HepG2 (cell line): ENCODE measurements at regions of chr13 and their contacts with region 1.

Region 1: DNA sequence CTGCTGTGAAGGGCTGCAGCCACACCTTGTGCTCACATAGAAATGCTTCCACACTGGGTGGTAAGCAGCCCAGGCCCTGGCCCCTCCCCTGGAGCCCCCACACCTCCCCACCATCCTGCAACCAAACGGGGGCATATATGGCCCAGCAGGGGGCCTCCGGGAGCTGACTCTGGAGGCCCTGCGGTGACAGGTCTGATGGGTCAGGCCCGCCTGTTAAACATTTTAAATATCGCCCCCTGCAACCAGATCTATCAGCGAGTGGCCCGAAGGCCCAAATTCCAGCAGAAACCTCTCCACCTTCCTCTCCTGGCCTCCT is 48.0 kb upstream of the KATNAL1 start:
- DNase-seq: peak; percentile 49
- ATAC-seq: peak; percentile 99
- H3K4me3 ChIP-seq: no peak overlapping the region; a peak in 1 of 6 replicates
- H3K27ac ChIP-seq: no peak overlapping the region
- H3K4me1 ChIP-seq: peaks cover 10% of the 10 kb centered on the region
- H3K27me3 ChIP-seq: peaks cover 0 to 2% of the 10 kb centered on the region in 2 experiments; a peak in 1 of 5 replicates
- CTCF ChIP-seq: peak; percentile 80
- EP300 ChIP-seq: no peak
- POLR2A ChIP-seq: no peak
- RAD21 ChIP-seq: peak; percentile 60

Region 2: DNA sequence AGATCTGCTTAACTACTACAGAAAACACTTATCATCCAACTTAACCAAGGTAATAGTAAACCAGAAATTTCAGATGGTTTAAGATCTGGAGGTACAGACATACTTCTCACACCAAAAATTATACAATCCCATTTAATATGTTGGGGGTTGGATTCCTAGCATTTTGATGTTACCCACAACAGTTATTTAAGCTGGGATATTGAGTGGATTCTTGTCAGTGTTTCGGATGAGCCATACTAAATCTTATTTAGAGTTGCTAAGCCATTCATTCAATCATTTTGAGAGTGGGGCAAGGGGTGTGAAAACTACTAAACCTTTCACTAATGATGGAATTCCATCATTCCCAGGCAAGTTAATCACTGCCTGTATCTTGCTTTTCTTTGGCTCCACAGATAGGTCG is 88.6 kb before region 1 on chr13:
- CTCF ChIA-PET with region 1: no interaction called
- POLR2A ChIA-PET with region 1: no interaction called
- in situ Hi-C with region 1: no loop called
- intact Hi-C with region 1: no loop called
- DNase-seq: no peak
- ATAC-seq: no peak
- H3K4me3 ChIP-seq: no peak overlapping the region
- H3K27ac ChIP-seq: no peak overlapping the region
- H3K4me1 ChIP-seq: no peaks in the 10 kb centered on the region
- H3K27me3 ChIP-seq: no peaks in the 10 kb centered on the region
- CTCF ChIP-seq: no peak
- EP300 ChIP-seq: no peak
- POLR2A ChIP-seq: no peak
- RAD21 ChIP-seq: no peak

Region 3: GRCh38 chr13:30334663-30335386 is 20.5 kb before region 1 on chr13:
- CTCF ChIA-PET with region 1: no interaction called
- POLR2A ChIA-PET with region 1: no interaction called
- in situ Hi-C with region 1: no loop called
- intact Hi-C with region 1: no loop called
- DNase-seq: peak; percentile 80
- ATAC-seq: peak; percentile 98
- H3K4me3 ChIP-seq: peak overlapping the region in 1 of 3 experiments; percentile 45; a peak in 2 of 6 replicates
- H3K27ac ChIP-seq: no peak overlapping the region
- H3K4me1 ChIP-seq: peaks cover 18% of the 10 kb centered on the region
- H3K27me3 ChIP-seq: 0 out of 5 replicates have a peak, but pooled peaks cover 0 to 9% of the 10 kb centered on the region in 2 experiments
- CTCF ChIP-seq: peak; percentile 92
- EP300 ChIP-seq: no peak
- POLR2A ChIP-seq: no peak
- RAD21 ChIP-seq: peak; percentile 85

Region 4: GRCh38 chr13:30371649-30372265 is 16.4 kb after region 1 on chr13:
- CTCF ChIA-PET with region 1: no interaction called
- POLR2A ChIA-PET with region 1: no interaction called
- in situ Hi-C with region 1: no loop called
- intact Hi-C with region 1: no loop called
- DNase-seq: peak; percentile 35
- ATAC-seq: peak; percentile 79
- H3K4me3 ChIP-seq: peak overlapping the region in 2 of 3 experiments; percentile 8 to 45; a peak in 2 of 6 replicates
- H3K27ac ChIP-seq: no peak overlapping the region
- H3K4me1 ChIP-seq: peaks cover 22% of the 10 kb centered on the region
- H3K27me3 ChIP-seq: peaks cover 1 to 4% of the 10 kb centered on the region in 2 experiments; a peak in 3 of 5 replicates
- CTCF ChIP-seq: no peak
- EP300 ChIP-seq: no peak
- POLR2A ChIP-seq: no peak
- RAD21 ChIP-seq: no peak

Region 5: GRCh38 chr13:30551189-30551588 is 195.8 kb after region 1 on chr13:
- CTCF ChIA-PET with region 1: interaction called, 3 read pairs
- POLR2A ChIA-PET with region 1: no interaction called
- in situ Hi-C with region 1: no loop called
- intact Hi-C with region 1: loop called (anchors 1 kb)
- DNase-seq: peak; percentile 29
- ATAC-seq: peak; percentile 82
- H3K4me3 ChIP-seq: no peak overlapping the region
- H3K27ac ChIP-seq: no peak overlapping the region
- H3K4me1 ChIP-seq: no peaks in the 10 kb centered on the region
- H3K27me3 ChIP-seq: no peaks in the 10 kb centered on the region; a peak in 1 of 5 replicates
- CTCF ChIP-seq: peak; percentile 51
- EP300 ChIP-seq: no peak
- POLR2A ChIP-seq: no peak
- RAD21 ChIP-seq: 0 out of 2 replicates have a peak, but pooled peaks have one; percentile 15

Region 6: DNA sequence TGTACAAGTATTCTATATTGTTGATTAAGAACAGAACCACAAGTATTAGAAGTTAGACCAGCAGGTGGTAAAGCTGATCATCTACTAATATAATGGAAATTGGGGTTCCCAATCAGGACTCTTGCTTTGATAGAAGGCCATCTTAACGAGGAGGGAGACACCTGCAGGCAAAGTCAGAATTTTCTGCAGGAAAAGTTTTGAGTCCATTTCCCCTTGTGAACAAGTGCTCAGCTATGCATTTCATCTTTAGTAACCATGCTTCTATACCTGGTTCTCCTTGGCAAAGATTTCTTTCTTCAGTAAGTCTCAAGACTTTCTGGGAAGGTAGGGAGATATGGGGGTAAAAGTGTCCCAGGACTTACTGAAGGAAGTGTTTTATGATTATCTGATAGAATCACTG is 226.2 kb after region 1 on chr13:
- CTCF ChIA-PET with region 1: interaction called, 6 read pairs
- POLR2A ChIA-PET with region 1: no interaction called
- in situ Hi-C with region 1: no loop called
- intact Hi-C with region 1: loop called (anchors 1 kb)
- DNase-seq: peak; percentile 8
- ATAC-seq: no peak
- H3K4me3 ChIP-seq: no peak overlapping the region
- H3K27ac ChIP-seq: no peak overlapping the region
- H3K4me1 ChIP-seq: no peaks in the 10 kb centered on the region
- H3K27me3 ChIP-seq: no peaks in the 10 kb centered on the region
- CTCF ChIP-seq: peak; percentile 44
- EP300 ChIP-seq: no peak
- POLR2A ChIP-seq: no peak
- RAD21 ChIP-seq: no peak